Heart left ventricle (tissue), 16 donors: ENCODE measurements at regions of chr7 and their contacts with region 1.

Region 1: GRCh38 chr7:47088329-47089067 is 493.4 kb downstream of the TNS3 start:
- DNase-seq: peak; percentile 41 to 77 (median 62)
- ATAC-seq: peak; percentile 80 to 94 (median 90)
- H3K4me3 ChIP-seq: no peak overlapping the region
- H3K27ac ChIP-seq: peak overlapping the region in 1 of 12 donors; percentile 39
- H3K4me1 ChIP-seq: peaks cover 0 to 12% (median 3%) of the 10 kb centered on the region in 12 donors
- H3K27me3 ChIP-seq: no peaks in the 10 kb centered on the region
- CTCF ChIP-seq: peak; percentile 77 to 96 (median 92)
- POLR2A ChIP-seq: no peak

Region 2: GRCh38 chr7:46352004-46352954 is 736.2 kb before region 1 on chr7:
- intact Hi-C with region 1: loop called in 5 of 10 experiments (anchors 2 to 10 kb)
- DNase-seq: peak in 3 of 5 donors; percentile 20 to 45 (median 23)
- ATAC-seq: peak in 2 of 4 donors; percentile 58 to 74
- H3K4me3 ChIP-seq: no peak overlapping the region
- H3K27ac ChIP-seq: no peak overlapping the region
- H3K4me1 ChIP-seq: no peaks in the 10 kb centered on the region
- H3K27me3 ChIP-seq: peaks cover 0 to 3% (median 0%) of the 10 kb centered on the region in 9 donors
- CTCF ChIP-seq: peak; percentile 37 to 77 (median 68)
- POLR2A ChIP-seq: no peak

Region 3: DNA sequence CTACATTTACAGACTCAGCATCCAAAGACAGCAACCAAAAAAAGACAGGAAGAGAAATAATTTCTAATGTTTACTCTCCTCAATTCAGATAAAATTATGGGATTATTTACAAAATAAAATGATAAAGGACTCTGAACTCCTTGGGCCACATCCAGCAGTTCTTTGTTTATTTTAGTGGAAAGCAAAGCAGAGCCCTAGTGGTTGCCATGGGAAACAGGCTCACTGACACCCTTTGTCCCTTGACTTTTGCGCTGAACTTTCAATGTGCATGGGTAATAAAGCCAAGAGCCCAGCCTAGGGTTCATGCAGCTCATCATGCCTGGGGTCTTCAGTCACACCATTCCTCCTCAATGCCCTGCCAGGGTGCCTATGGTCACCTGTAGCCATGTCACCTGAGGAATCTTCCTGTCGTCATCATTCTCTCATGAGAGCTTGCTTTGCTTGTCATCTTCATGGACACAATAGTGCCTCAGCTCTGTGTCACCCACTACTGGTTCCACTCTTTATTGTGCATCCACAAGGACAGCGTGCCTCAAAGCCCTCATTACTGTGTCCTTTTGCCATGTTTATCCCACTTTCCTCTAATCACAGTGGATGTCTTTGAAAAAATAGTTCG is 724.7 kb before region 1 on chr7:
- intact Hi-C with region 1: loop called in 7 of 10 experiments (anchors 5 to 10 kb)
- DNase-seq: no peak
- ATAC-seq: no peak
- H3K4me3 ChIP-seq: no peak overlapping the region
- H3K27ac ChIP-seq: no peak overlapping the region
- H3K4me1 ChIP-seq: no peaks in the 10 kb centered on the region
- H3K27me3 ChIP-seq: no peaks in the 10 kb centered on the region
- CTCF ChIP-seq: peak in 1 of 12 donors; percentile 9
- POLR2A ChIP-seq: no peak

Region 4: GRCh38 chr7:46603780-46604179 is 484.7 kb before region 1 on chr7:
- intact Hi-C with region 1: loop called in 3 of 10 experiments (anchors 5 to 10 kb)
- DNase-seq: peak; percentile 79 to 96 (median 91)
- ATAC-seq: peak; percentile 96 to 97 (median 96)
- H3K4me3 ChIP-seq: peak overlapping the region in 1 of 12 donors; percentile 14
- H3K27ac ChIP-seq: peak overlapping the region; percentile 61 to 89 (median 82)
- H3K4me1 ChIP-seq: peaks cover 3 to 38% (median 24%) of the 10 kb centered on the region in 12 donors
- H3K27me3 ChIP-seq: no peaks in the 10 kb centered on the region
- CTCF ChIP-seq: no peak
- POLR2A ChIP-seq: no peak

Region 5: GRCh38 chr7:46932676-46933424 is 155.6 kb before region 1 on chr7:
- intact Hi-C with region 1: loop called in 1 of 10 experiments (anchors 10 kb)
- DNase-seq: peak in 3 of 5 donors; percentile 26 to 59 (median 37)
- ATAC-seq: peak; percentile 59 to 85 (median 73)
- H3K4me3 ChIP-seq: no peak overlapping the region
- H3K27ac ChIP-seq: peak overlapping the region in 10 of 12 donors; percentile 8 to 71 (median 37)
- H3K4me1 ChIP-seq: peaks cover 0 to 36% (median 20%) of the 10 kb centered on the region in 12 donors
- H3K27me3 ChIP-seq: no peaks in the 10 kb centered on the region
- CTCF ChIP-seq: peak in 6 of 12 donors; percentile 10 to 49 (median 22)
- POLR2A ChIP-seq: no peak

Region 6: GRCh38 chr7:47232751-47233412 is 144.4 kb after region 1 on chr7:
- intact Hi-C with region 1: loop called in 1 of 10 experiments (anchors 10 kb)
- DNase-seq: no peak
- ATAC-seq: peak in 3 of 4 donors; percentile 27 to 59 (median 36)
- H3K4me3 ChIP-seq: no peak overlapping the region
- H3K27ac ChIP-seq: no peak overlapping the region
- H3K4me1 ChIP-seq: peaks cover 0 to 11% (median 0%) of the 10 kb centered on the region in 12 donors
- H3K27me3 ChIP-seq: no peaks in the 10 kb centered on the region
- CTCF ChIP-seq: peak in 11 of 12 donors; percentile 4 to 49 (median 32)
- POLR2A ChIP-seq: no peak